Activated CD4-positive, alpha-beta memory T cell treated with anti-CD3 and anti-CD28 coated beads, Interleukin-2, amount 10 ng/mL, durations not matched to agents 7 days and 5 days (primary cell): ENCODE measurements at regions of chr16 and their contacts with region 1.

Region 1: DNA sequence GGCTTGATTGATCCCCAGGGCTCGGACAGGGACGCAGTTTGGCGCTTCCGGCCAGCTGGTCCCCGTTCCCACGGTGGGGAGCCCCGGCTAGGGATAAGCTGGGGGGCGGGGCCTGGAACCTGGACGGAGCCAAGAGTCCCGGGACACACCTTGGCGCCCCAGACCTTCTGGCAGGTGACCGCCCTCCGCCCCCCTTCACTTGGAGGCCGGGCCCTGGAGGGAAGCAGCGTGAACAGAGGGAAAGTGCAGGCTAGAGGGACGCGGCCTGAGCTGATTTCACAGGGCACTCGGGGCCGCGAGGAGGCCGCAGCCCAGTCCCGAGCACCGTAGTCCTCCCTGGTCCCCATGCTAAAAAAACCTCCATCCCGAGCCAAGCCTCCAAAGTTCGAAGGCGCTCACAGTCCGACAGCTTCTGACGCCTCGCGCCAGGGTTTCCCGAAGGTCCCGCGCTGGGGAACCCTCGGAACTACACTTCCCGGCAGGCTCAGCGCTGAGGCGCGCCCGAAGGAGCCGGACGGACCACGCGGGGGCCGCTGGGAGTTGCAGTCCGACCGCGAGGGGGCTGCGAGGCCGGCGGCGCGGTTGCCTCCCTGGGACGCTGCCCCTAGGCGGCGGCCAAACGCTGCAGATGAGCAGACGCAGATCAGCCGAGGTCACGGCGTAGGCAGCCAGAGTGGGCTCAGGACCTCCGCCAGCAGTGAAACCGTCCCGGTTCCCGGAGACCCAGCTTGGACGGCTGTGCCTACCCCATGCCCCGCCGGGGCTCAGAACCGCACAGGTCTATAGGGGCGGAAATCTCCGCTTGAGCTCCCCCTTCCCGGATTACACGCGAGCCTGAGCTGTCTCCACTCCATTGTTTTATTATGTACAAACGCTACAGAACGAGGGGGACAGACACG is at the start of gene TBX6:
- DNase-seq: peak; percentile 95
- H3K4me3 Mint-ChIP-seq: peak within 1 kb of the TSS; percentile 88
- H3K27ac Mint-ChIP-seq: peak within 1 kb of the TSS; percentile 96
- H3K4me1 Mint-ChIP-seq: peaks cover 63% of the 10 kb centered on the region
- H3K27me3 Mint-ChIP-seq: no peaks in the 10 kb centered on the region
- total RNA-seq, gene TBX6: 1.9 to 2.5 TPM

Region 2: GRCh38 chr16:29900102-29900887 is 191.4 kb before region 1 on chr16 and contains the start of gene ASPHD1:
- CTCF ChIA-PET with region 1: no interaction called
- POLR2A ChIA-PET with region 1: no interaction called
- DNase-seq: peak; percentile 66
- H3K4me3 Mint-ChIP-seq: peak within 1 kb of the TSS; percentile 58
- H3K27ac Mint-ChIP-seq: no peak within 1 kb of the TSS
- H3K4me1 Mint-ChIP-seq: peaks cover 9% of the 10 kb centered on the region
- H3K27me3 Mint-ChIP-seq: peaks cover 21% of the 10 kb centered on the region
- total RNA-seq, gene ASPHD1: 0.15 TPM in 1 of 2 experiments, not detected in the other

Region 3: DNA sequence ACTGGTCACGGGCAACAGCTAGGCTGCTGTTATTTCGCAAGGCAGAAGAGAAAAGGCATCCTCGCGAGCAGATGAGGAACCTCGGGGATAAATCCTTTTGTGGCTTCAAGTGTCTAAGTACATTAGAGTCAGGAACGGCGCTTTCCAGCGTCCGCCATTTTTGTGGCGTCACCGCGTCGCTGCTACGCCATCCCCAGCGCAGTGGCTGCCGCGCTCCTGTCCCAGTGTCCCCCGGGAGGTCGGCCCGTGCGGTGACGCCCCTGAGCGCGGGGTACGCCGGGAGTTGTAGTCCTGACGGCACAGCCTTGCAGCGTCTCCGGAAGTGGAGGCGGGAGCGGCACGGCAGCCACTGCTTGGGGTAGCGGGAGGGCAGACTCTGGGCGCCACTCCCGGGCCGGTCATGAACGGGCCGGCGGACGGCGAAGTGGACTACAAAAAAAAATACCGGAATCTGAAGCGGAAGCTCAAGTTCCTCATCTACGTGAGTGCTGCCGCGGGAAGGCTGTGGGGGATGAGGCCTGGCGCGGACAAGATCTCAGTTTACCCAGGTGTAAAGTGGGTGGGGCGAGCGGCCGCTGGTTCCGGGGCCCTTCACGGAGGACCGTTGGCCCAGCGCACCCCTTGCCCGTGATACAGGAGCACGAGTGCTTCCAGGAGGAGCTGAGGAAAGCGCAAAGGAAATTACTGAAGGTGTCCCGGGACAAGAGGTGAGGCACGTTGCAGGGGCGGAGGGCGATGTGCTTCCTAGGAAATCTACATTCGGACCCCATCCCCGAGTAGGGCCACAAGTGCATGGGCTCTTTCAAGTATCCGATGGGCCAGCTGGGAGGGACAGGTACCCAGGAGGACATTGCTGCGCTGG is 95.6 kb before region 1 on chr16 and contains the start of gene INO80E:
- CTCF ChIA-PET with region 1: no interaction called
- POLR2A ChIA-PET with region 1: no interaction called
- DNase-seq: peak; percentile 100
- H3K4me3 Mint-ChIP-seq: peak within 1 kb of the TSS; percentile 94
- H3K27ac Mint-ChIP-seq: peak within 1 kb of the TSS; percentile 98
- H3K4me1 Mint-ChIP-seq: peaks cover 45% of the 10 kb centered on the region
- H3K27me3 Mint-ChIP-seq: no peaks in the 10 kb centered on the region
- total RNA-seq, gene INO80E: 102 to 107 TPM

Region 4: GRCh38 chr16:30052671-30053372 is 38.9 kb before region 1 on chr16:
- CTCF ChIA-PET with region 1: interaction called, 29 read pairs
- POLR2A ChIA-PET with region 1: interaction called, 3 read pairs
- DNase-seq: peak; percentile 94
- H3K4me3 Mint-ChIP-seq: peak overlapping the region; percentile 84
- H3K27ac Mint-ChIP-seq: peak overlapping the region; percentile 42
- H3K4me1 Mint-ChIP-seq: peaks cover 40% of the 10 kb centered on the region
- H3K27me3 Mint-ChIP-seq: no peaks in the 10 kb centered on the region

Region 5: DNA sequence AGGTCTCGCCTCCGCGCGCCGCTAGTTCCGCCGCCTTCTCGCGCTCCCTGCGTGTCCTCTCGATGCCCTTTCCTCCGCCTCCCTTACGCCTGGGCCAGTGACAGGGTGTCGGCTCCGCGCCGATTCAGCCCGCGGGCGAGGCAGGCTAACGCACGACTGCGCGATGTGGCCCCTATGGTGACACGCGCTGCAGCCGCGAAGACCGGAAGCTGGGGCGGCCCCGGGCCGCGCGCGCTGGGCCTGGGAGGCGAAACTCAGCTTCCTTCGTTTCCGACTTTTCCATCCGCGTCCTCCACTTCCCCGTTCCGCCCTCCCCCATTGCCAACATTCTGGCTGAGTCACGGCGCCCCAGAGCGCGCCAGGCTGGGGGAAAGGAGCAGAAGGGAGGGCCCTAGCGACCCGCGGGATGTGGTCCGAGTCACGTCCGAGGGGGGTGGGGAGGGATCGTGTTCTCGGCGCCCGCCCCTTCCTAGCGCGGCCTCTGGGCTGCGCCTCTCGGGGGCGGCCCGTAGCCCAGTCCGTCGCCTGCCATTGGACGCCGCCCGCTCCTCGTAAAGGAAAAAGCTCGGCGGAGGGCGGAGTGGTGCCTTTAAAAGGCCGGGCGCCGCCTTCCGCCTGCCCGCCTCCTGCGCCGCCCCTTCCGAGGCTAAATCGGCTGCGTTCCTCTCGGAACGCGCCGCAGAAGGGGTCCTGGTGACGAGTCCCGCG is 26.4 kb before region 1 on chr16 and contains the start of gene ALDOA:
- CTCF ChIA-PET with region 1: interaction called, 40 read pairs
- POLR2A ChIA-PET with region 1: interaction called, 63 read pairs
- DNase-seq: peak; percentile 97
- H3K4me3 Mint-ChIP-seq: peak within 1 kb of the TSS; percentile 95
- H3K27ac Mint-ChIP-seq: peak within 1 kb of the TSS; percentile 99
- H3K4me1 Mint-ChIP-seq: peaks cover 36% of the 10 kb centered on the region
- H3K27me3 Mint-ChIP-seq: no peaks in the 10 kb centered on the region
- total RNA-seq, gene ALDOA: 1,403 to 1,450 TPM

Region 6: DNA sequence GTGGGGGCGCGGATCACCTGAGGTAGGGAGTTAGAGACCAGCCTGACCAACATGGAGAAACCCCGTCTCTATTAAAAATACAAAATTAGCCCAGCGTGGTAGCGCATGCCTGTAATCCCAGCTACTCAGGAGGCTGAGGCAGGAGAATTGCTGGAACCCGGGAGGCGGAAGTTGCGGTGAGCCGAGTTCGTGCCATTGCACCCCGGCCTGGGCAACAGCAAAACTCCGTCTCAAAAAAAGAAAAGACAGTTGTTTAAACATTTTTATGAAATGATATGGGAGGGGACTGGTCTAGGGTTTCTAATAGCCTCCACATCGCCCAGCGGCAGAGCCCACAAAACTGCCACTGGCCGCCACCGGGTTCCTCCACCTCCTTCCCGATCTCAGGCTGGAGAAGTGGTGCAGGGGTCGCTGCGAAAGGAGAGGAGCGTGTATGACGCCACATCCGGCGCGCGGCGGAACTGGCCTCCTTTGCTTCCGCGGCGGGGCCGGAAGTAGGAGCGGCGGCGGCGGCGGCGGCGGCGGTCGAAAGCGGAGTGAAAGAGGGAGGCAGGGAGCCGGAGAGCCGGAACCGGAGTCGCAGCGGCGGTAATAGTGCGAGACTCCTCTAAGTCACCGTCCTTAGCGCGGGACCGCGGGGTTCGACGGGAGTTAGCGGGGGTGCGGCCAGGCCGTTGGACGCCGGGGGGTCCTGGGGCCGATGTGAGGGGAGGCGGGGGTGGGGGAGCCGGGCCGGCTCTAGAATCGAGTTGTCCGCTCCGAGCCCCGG is 16.0 kb before region 1 on chr16 and contains the start of gene PPP4C:
- CTCF ChIA-PET with region 1: interaction called, 58 read pairs
- POLR2A ChIA-PET with region 1: interaction called, 107 read pairs
- DNase-seq: peak; percentile 95
- H3K4me3 Mint-ChIP-seq: peak within 1 kb of the TSS; percentile 97
- H3K27ac Mint-ChIP-seq: peak within 1 kb of the TSS; percentile 92
- H3K4me1 Mint-ChIP-seq: peaks cover 46% of the 10 kb centered on the region
- H3K27me3 Mint-ChIP-seq: no peaks in the 10 kb centered on the region
- total RNA-seq, gene PPP4C: 146 to 147 TPM

Region 7: DNA sequence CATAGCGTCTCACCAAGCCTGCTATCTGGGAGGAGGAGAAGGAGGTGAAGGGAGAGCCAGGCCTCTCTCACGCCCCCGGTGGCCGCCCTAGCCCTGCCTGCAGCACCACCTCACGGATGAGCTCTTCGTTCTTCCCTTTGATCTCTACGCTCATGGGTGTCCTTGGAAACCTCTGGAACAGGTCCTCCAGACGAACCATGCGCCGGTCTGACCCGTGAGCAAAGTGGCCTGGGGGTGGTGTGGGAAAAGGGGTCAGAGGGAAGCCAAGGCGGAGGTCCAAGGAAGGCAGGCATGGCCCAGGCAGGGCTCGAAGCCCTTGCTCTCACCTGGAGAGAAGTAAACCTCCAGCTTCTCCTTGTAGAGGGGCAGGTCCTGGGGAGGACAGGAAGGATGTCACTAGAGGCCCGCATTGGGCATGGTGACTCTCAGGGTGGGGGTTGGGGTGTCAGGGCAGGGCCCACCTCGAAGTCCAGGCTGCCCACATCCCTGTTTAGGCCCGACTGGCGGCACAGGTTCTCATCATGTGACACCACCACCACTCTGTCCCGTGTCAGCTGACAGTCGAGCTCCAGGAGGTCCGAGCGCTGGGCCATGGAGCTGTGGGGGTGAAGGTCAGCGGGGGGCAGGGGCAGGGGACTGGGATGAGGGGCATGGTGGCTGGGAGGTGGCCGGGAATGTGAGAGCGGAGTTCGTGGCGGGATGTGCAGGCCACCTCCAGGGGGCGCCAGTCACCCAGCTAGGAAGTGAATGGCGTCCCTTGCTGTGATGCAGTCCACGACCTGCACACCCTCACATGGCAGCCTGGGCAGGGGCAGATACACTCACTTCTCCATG is 20.7 kb after region 1 on chr16:
- CTCF ChIA-PET with region 1: interaction called, 19 read pairs
- POLR2A ChIA-PET with region 1: interaction called, 3 read pairs
- DNase-seq: peak; percentile 71
- H3K4me3 Mint-ChIP-seq: no peak overlapping the region
- H3K27ac Mint-ChIP-seq: peak overlapping the region; percentile 26
- H3K4me1 Mint-ChIP-seq: peaks cover 16% of the 10 kb centered on the region
- H3K27me3 Mint-ChIP-seq: no peaks in the 10 kb centered on the region

Region 8: DNA sequence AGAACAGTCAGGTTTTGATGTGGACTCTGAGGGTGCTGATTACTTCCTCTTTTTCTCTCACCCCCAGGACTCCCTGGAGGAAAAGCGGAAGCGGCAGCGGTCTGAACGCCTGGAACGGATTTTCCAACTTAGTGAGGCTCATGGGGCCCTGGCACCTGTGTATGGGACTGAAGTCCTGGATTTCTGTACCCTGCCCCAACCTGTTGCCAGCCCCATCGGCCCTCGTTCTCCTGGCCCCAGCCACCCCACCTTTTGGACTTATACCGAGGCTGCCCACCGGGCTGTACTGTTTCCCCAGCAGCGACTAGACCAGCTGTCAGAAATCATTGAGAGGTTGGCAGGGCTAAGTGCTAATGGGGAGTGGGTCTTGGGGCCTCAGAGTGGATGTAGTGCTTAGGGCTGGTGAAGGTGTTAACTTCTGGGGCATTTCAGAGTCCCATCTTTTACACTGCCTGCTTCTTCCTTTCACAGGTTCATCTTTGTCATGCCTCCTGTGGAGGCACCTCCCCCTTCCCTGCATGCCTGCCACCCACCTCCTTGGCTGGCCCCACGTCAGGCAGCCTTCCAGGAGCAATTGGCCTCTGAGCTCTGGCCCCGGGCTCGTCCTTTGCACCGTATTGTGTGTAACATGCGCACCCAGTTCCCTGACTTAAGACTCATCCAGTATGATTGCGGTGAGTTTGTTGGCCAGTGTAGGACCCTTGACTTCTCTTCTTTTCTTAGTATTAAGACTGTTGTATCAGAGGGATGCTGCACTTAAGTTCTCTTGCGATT is 637.4 kb after region 1 on chr16:
- CTCF ChIA-PET with region 1: no interaction called
- POLR2A ChIA-PET with region 1: no interaction called
- DNase-seq: no peak
- H3K4me3 Mint-ChIP-seq: no peak overlapping the region
- H3K27ac Mint-ChIP-seq: no peak overlapping the region
- H3K4me1 Mint-ChIP-seq: peaks cover 14% of the 10 kb centered on the region
- H3K27me3 Mint-ChIP-seq: no peaks in the 10 kb centered on the region